ENCODE measurements at regions of chr13 and their contacts with region 1.

Region 1: GRCh38 chr13:68970532-68970931 is 1137.1 kb upstream of the ATXN8OS start:
- DNase-seq: no peak
- ATAC-seq: no peak

Region 2: GRCh38 chr13:69050696-69051095 is 80.2 kb after region 1 on chr13:
- intact Hi-C with region 1: no loop called
- DNase-seq: no peak
- ATAC-seq: no peak

Region 3: GRCh38 chr13:69296130-69296529 is 325.6 kb after region 1 on chr13:
- intact Hi-C with region 1: no loop called
- DNase-seq: no peak
- ATAC-seq: no peak

Region 4: DNA sequence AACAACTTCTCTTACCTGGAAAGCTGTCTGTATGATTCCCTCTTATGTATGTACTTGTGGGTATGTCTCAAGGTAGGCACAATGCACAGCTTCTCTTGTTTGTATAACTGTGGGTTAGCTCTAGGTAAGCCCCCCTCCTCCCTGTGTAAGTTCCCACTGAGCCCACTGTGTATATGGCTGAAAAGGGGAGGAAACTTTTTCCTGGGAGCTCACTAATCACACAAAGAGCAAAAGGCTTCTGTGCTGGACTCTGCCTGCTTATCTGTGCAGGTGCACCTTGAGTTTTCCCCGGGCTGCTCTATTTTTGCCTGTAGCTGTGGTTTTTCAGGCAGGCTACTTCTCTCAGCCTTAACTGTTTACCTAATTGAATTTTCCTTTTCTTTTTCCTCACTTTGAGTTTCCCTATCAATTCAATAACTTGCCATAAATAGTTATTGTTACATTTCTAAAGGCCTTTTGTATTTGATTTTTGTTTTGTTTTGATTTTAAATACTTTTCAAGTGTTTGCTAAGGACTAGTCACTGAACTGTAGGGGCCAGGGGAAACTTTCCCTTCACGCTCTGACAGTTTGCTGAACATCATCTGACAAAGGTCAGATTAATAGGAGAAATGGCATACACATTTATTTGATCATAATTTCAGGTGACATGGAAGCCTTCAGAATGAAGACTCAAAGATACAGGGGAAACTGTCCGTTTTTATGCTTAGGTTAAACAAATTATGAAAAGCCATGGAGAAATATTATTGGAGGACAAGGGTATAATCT is 713.6 kb after region 1 on chr13:
- intact Hi-C with region 1: loop called (anchors 5 kb)
- DNase-seq: no peak
- ATAC-seq: peak; percentile 22